ENCODE measurements at regions of chr1 and their contacts with region 1.

Region 1: GRCh38 chr1:93345633-93346420 is at the start of gene DR1:
- DNase-seq: peak; percentile 95 to 98
- ATAC-seq: peak; percentile 97 to 99 (median 98)
- H3K4me3 ChIP-seq: peak within 1 kb of the TSS; percentile 93
- H3K27ac ChIP-seq: peak within 1 kb of the TSS; percentile 94
- H3K4me1 ChIP-seq: peaks cover 27% of the 10 kb centered on the region
- H3K27me3 ChIP-seq: no peaks in the 10 kb centered on the region
- CTCF ChIP-seq: no peak
- total RNA-seq, gene DR1: 38.1 to 46.7 (median 42.6) TPM

Region 2: GRCh38 chr1:93123201-93123783 is 222.5 kb before region 1 on chr1:
- intact Hi-C with region 1: no loop called
- DNase-seq: no peak
- ATAC-seq: no peak
- H3K4me3 ChIP-seq: no peak overlapping the region
- H3K27ac ChIP-seq: no peak overlapping the region
- H3K4me1 ChIP-seq: peaks cover 5% of the 10 kb centered on the region
- H3K27me3 ChIP-seq: no peaks in the 10 kb centered on the region
- CTCF ChIP-seq: no peak

Region 3: GRCh38 chr1:93304716-93305138 is 41.1 kb before region 1 on chr1:
- intact Hi-C with region 1: loop called in 1 of 2 experiments (anchors 5 kb)
- DNase-seq: no peak
- ATAC-seq: peak; percentile 51 to 89 (median 70)
- H3K4me3 ChIP-seq: no peak overlapping the region
- H3K27ac ChIP-seq: no peak overlapping the region
- H3K4me1 ChIP-seq: no peaks in the 10 kb centered on the region
- H3K27me3 ChIP-seq: no peaks in the 10 kb centered on the region
- CTCF ChIP-seq: peak; percentile 87

Measured in psoas muscle (tissue), 8 donors.